AG04449 (cell line): ENCODE measurements at regions of chr12 and their contacts with region 1.

Region 1: GRCh38 chr12:4276524-4277204 is 3.1 kb downstream of the CCND2 start:
- DNase-seq: peak; percentile 7
- H3K4me3 ChIP-seq: no peak overlapping the region
- CTCF ChIP-seq: peak; percentile 89

Region 2: GRCh38 chr12:3885277-3886094 is 391.2 kb before region 1 on chr12:
- CTCF ChIA-PET with region 1: interaction called, 241 read pairs
- POLR2A ChIA-PET with region 1: no interaction called
- DNase-seq: no peak
- H3K4me3 ChIP-seq: peak overlapping the region; percentile 38
- CTCF ChIP-seq: peak; percentile 54

Region 3: GRCh38 chr12:3998968-3999826 is 277.5 kb before region 1 on chr12:
- CTCF ChIA-PET with region 1: interaction called, 105 read pairs
- POLR2A ChIA-PET with region 1: interaction called, 3 read pairs
- DNase-seq: no peak
- H3K4me3 ChIP-seq: no peak overlapping the region
- CTCF ChIP-seq: no peak

Region 4: DNA sequence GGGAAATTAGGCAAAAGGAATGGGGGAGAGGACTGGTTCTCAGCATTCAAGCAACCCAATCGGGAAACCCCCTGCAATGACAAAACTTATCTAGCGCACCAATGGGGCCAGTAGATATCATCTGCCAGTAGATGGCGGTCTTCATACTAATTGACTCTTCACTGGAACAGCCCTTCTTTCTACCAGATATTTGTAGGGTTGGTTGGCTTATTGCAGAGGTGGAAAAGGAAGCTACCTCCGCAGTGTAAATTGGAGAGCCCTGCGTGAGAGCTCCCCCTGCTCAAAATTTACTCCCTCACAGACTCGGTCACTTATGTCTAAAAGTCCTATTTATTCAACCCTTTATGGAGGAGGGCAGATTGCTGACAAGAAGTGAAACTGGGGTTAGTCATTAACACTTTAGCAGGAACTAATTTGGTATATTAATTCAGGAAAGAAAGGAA is 169.2 kb before region 1 on chr12:
- CTCF ChIA-PET with region 1: interaction called, 102 read pairs
- POLR2A ChIA-PET with region 1: no interaction called
- DNase-seq: no peak
- H3K4me3 ChIP-seq: no peak overlapping the region
- CTCF ChIP-seq: peak; percentile 67

Region 5: DNA sequence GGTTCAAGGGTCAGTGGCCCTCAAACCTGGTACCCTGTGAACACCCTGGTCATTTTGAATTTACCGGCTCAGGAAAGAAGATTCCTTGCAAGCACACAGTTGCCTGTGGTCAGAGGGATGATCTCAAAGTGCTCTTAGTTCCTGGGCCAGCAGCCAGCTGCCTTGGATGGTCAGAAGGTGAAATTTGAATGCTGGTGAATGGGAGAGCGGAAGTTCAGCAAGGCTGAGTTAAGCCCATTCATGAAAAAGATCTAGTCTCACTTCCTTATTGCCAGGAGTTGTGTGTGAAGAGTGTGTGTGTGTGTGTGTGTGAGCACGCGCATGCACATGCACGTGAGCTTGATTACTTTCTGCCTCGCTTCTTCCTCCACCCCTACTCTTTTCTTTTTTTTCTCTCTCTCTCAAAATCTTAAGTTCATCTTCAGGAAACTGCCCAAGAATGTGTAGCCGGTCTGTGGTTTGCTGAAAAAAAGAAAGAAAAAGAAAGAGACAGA is 158.6 kb before region 1 on chr12:
- CTCF ChIA-PET with region 1: interaction called, 22 read pairs
- POLR2A ChIA-PET with region 1: no interaction called
- DNase-seq: no peak
- H3K4me3 ChIP-seq: no peak overlapping the region
- CTCF ChIP-seq: no peak

Region 6: DNA sequence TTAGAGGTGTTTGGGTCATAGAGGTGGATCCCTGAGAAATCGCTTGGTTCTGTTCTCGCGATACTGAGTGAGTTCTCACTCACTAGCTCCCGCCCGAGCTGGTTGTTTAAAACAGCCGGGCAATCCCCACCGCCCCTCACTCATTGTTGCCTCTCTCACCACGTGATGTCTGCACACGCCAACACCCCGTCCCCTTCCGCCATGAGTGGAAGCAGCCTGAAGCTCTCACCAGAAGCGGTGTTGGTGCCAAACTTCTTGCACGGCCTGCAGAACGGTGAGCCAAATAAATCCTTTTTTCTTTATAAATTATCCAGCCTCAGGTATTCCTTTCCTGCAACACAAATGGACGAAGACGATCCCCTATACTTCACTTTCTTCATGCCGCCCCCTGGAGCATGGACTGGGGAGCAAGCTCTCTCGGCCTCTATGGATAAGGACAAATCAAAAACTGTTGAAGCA is 48.5 kb before region 1 on chr12:
- CTCF ChIA-PET with region 1: no interaction called
- POLR2A ChIA-PET with region 1: no interaction called
- DNase-seq: no peak
- H3K4me3 ChIP-seq: no peak overlapping the region
- CTCF ChIP-seq: no peak

Region 7: GRCh38 chr12:4287325-4288211 is 10.9 kb after region 1 on chr12:
- CTCF ChIA-PET with region 1: interaction called, 23 read pairs
- POLR2A ChIA-PET with region 1: no interaction called
- DNase-seq: no peak
- H3K4me3 ChIP-seq: no peak overlapping the region
- CTCF ChIP-seq: no peak

Region 8: DNA sequence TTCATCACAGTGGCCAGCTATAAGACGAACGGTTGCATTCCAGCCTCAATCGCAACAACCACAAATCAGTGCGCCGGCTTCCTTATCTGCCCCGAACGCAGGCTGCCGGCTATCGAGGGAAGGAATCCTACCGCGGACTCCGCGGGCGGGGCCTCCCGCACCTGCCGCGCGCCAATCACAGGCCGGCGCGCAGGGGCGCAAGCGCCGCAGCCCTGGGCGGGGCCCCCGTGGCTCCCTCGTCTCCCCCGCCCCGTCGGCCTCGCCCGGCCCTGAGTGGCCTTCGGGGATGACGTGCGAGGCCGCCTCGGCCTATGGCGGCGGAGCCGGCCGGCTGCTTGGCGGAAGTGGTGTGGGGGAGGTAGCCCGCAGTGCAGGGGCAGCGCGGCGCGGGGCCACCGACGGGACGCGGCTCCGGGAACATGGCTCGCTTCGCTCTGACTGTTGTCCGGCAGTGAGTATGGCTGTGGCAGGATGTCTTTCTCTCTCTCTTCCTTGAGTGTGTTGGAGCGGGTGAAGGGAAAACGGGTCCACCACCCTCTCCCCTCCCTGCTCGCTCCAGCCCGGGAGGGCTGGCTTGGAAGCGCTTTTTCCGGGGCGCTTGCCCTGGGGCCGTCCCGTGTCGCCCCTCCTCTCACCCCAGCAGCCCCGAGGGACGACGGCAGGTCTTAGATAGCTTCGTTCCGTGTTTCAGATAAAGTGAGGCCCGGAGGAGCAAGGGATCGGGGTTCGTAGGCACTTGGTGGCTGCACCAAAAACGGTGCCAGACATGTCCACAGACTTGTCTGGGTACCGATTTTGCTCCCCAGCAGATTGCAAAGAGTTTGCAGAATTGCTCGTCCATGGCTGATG is 44.4 kb after region 1 on chr12 and contains the start of gene TIGAR:
- CTCF ChIA-PET with region 1: interaction called, 14 read pairs
- POLR2A ChIA-PET with region 1: no interaction called
- DNase-seq: peak; percentile 42
- H3K4me3 ChIP-seq: peak within 1 kb of the TSS; percentile 93
- CTCF ChIP-seq: no peak

Region 9: DNA sequence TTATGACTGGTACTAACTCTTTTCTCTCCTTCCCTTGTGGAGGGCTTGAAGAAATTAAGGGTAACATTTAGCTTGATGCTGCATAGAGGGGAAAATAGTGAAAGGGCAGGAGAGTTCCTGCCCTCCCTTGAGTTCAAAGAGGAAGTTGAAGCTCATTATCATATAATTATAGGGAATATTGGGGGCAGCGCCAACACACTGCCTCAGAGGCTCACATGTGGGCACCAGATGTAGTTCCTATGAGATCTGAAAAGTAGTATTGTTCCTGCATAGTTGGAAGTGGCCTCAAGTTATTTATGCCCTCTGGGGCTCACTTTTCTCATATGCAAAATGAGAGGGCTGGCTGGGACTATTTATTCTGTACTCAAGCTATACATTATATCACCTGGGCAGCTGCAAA is 135.8 kb after region 1 on chr12:
- CTCF ChIA-PET with region 1: no interaction called
- POLR2A ChIA-PET with region 1: no interaction called
- DNase-seq: no peak
- H3K4me3 ChIP-seq: no peak overlapping the region
- CTCF ChIP-seq: no peak